ENCODE measurements at regions of chr22 and their contacts with region 1.

Region 1: DNA sequence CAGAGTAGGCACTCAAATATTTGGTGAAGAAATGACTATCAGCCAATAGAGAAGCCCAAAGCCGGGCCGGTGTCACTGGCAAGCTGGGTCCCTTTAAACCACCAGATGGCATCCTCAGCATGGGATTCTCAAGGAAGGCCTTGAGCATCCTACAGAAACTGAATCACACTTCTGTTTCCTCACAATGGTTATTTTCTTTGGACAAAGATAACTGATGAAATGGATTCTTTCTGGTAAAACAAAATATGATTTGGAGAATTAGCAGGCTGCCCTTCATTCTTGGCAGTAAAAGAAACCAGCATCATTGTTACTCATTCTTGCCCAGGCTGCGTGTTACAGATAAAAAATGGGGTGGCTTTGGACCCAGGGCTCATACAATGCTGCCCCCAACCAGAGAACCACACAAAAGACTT is 30.3 kb upstream of the ASPHD2 start:
- DNase-seq: peak; percentile 3 to 77 (median 40)
- ATAC-seq: peak; percentile 90
- H3K4me3 ChIP-seq: no peak overlapping the region
- H3K27ac ChIP-seq: no peak overlapping the region
- H3K4me1 ChIP-seq: no peaks in the 10 kb centered on the region
- H3K27me3 ChIP-seq: peaks cover 0 to 21% of the 10 kb centered on the region in 2 donors
- CTCF ChIP-seq: peak; percentile 57 to 70

Region 2: DNA sequence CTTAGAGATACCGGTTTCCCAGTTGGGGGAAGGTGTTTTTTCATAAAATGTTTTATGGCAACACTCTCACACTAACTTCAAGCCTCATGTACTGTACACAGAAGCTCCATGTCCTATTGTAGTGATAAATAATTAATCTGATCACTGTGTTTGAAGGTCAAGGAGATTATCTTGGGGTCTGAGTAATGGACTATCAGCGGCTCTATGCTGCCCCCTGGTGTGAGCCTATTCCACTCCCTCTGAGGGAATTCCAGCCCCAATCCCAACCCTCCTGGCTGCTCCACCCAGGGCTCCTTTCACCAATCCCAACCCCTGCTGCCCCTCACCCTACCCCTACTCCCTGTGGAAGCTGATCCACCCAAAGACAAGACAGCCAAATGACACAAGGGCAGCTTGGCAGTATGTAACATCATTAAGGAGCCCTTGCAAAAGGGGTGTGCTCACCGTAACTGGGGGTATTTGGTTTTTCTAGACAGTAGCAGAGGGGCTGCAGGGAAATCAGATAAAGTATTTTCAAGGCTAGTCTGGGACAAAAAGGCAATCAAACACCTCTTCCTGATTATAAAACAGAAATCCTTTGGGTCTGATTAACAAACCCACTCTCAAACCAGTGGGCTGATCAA is 62.6 kb after region 1 on chr22:
- intact Hi-C with region 1: loop called in 1 of 2 experiments (anchors 10 kb)
- DNase-seq: peak in 1 of 4 donors; percentile 24
- ATAC-seq: peak; percentile 89
- H3K4me3 ChIP-seq: no peak overlapping the region
- H3K27ac ChIP-seq: no peak overlapping the region
- H3K4me1 ChIP-seq: no peaks in the 10 kb centered on the region
- H3K27me3 ChIP-seq: no peaks in the 10 kb centered on the region
- CTCF ChIP-seq: peak; percentile 58 to 70

Region 3: DNA sequence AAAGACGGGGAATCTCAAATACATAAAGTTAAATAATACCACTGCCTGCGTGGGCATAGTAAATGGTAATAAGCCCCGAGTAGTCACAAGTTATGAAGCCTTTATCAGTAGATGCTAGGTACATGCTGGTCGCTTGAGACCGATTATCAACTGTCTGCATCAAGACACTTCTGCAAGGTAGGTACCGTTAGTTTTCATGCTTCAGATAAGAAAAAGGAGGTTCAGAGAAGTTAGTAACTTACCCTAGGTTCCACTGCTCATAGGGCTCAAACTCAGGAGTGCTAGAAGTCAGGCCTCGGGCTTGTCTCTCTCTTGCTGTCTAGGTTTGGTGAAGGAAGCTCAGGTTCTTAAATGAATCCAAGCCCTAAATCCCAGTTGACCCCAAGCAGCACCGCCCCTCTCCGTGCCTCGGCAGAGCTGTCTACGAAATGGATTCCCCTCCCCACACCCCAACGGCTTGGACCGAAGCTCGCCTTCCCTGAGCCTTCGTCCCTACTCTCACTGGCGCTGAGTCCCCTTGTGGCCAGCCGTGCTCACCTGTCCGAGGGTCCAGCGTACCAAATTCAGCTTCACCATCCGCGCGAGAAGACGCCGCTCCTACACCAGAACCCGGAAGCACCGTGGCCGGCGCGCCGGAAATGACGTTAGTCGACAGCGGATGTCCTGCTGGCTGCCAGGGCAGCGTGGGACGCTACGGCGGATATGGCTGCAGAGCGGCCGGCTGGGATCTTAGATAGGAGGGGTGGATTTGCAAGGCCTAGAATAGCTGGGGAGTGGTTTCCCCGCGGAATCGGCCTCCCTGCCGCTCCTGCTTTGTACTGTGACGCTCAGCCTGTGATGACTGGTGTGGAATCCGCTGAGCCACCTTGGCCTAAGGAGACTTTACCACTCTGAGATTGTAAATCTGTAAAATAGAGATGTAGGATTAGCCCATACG is 113.4 kb after region 1 on chr22 and contains the start of gene TFIP11:
- intact Hi-C with region 1: no loop called
- DNase-seq: peak; percentile 93 to 98 (median 95)
- ATAC-seq: peak; percentile 99
- H3K4me3 ChIP-seq: peak within 1 kb of the TSS; percentile 84 to 92
- H3K27ac ChIP-seq: peak within 1 kb of the TSS; percentile 64 to 84
- H3K4me1 ChIP-seq: peaks cover 13 to 37% of the 10 kb centered on the region in 2 donors
- H3K27me3 ChIP-seq: no peaks in the 10 kb centered on the region
- CTCF ChIP-seq: no peak
- polyA plus RNA-seq, gene TFIP11: 34.8 to 39.9 (median 36.8) TPM